Left cardiac atrium (tissue), 4 donors: ENCODE measurements at regions of chr20 and their contacts with region 1.

Region 1: DNA sequence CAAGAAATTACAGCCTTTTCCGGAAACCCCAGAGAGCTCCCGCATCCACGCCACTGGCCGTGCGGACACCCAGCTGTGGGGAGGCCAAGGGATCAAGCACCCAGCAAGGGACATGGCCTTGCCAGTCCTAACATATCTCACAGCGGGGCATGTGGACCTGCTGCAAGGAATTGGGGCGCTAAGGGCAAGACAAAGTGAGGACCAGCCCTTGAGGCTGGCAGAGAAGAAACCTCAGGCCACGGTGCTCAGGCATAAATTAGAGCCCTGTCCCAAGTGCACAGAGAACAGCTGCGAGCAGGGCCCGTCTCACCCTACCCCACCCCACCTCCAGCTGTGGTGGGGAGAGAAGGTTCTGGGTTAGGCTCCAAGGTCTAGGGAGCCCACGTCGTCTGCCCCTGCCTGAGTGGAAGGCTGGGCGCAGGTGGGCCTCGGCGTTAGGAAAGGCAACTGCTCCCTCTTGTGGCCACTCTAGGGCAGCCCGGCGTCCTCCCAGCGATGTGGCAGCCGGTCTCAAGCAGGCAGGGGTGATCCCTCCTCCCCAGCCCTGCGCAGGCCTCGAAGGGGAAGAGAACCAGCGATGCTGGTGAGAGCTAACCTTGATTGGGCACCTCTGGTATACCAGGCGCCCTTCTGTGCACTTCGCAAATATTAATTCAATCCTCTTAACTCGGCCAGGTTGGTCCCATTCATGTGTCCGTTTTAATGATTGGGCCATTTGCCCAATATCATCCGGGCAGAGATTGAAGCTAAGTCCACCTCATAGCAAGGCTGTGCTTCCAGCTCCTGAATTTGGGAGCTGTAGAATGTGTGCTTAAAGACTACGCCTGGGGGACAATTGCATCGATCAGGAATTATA is 235.8 kb downstream of the NFATC2 start:
- DNase-seq: peak; percentile 77
- ATAC-seq: peak; percentile 92 to 97

Region 2: DNA sequence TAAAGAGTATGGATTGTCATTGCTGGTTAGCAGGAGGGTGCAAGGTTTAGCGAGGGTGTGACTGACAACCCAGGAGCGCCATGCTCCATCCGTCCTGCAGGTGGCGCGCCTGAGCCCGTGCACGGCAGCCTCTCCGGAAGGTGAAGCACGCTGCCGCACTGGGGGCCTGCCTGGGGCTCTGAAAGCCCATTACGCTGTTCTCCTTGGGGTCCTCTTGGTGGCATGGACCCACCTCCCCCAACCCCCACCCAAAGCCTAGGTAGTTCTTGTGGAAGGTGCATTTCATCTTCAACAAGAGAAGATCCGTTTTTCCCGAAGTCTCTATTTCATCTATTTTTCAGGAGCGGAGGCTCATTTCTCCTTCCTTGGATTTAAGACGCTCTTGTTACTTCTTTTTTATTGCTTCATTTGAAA is 86.4 kb before region 1 on chr20:
- intact Hi-C with region 1: loop called in 1 of 2 experiments (anchors 10 kb)
- DNase-seq: peak; percentile 43
- ATAC-seq: peak in 1 of 2 donors; percentile 34